ENCODE measurements at regions of chr6 and their contacts with region 1.

Region 1: GRCh38 chr6:127748290-127748689 is 152.6 kb downstream of the THEMIS start:
- DNase-seq: no peak
- H3K4me3 ChIP-seq: no peak overlapping the region
- H3K4me3 Mint-ChIP-seq: peak overlapping the region in 5 of 8 donors; percentile 13 to 38 (median 21)
- H3K27ac ChIP-seq: no peak overlapping the region
- H3K27ac Mint-ChIP-seq: peak overlapping the region; percentile 36 to 85 (median 71)
- H3K4me1 ChIP-seq: peaks cover 55% of the 10 kb centered on the region
- H3K4me1 Mint-ChIP-seq: peaks cover 54 to 73% (median 62%) of the 10 kb centered on the region in 4 donors
- H3K27me3 ChIP-seq: no peaks in the 10 kb centered on the region
- H3K27me3 Mint-ChIP-seq: no peaks in the 10 kb centered on the region

Region 2: GRCh38 chr6:127725821-127726220 is 22.5 kb before region 1 on chr6:
- CTCF ChIA-PET with region 1: no interaction called
- POLR2A ChIA-PET with region 1: no interaction called
- intact Hi-C with region 1: loop called (anchors 1 kb)
- DNase-seq: no peak
- H3K4me3 ChIP-seq: no peak overlapping the region
- H3K4me3 Mint-ChIP-seq: no peak overlapping the region
- H3K27ac ChIP-seq: no peak overlapping the region
- H3K27ac Mint-ChIP-seq: peak overlapping the region in 2 of 7 donors; percentile 25 to 72
- H3K4me1 ChIP-seq: peaks cover 4% of the 10 kb centered on the region
- H3K4me1 Mint-ChIP-seq: peaks cover 50 to 53% (median 52%) of the 10 kb centered on the region in 4 donors
- H3K27me3 ChIP-seq: no peaks in the 10 kb centered on the region
- H3K27me3 Mint-ChIP-seq: no peaks in the 10 kb centered on the region

Region 3: GRCh38 chr6:127841811-127842210 is 93.5 kb after region 1 on chr6:
- CTCF ChIA-PET with region 1: no interaction called
- POLR2A ChIA-PET with region 1: no interaction called
- intact Hi-C with region 1: loop called (anchors 5 kb)
- DNase-seq: no peak
- H3K4me3 ChIP-seq: no peak overlapping the region
- H3K4me3 Mint-ChIP-seq: no peak overlapping the region
- H3K27ac ChIP-seq: no peak overlapping the region
- H3K27ac Mint-ChIP-seq: no peak overlapping the region
- H3K4me1 ChIP-seq: peaks cover 28% of the 10 kb centered on the region
- H3K4me1 Mint-ChIP-seq: peaks cover 28 to 47% (median 38%) of the 10 kb centered on the region in 4 donors
- H3K27me3 ChIP-seq: no peaks in the 10 kb centered on the region
- H3K27me3 Mint-ChIP-seq: no peaks in the 10 kb centered on the region

Measured in CD4-positive, alpha-beta memory T cell (primary cell).